ENCODE measurements at regions of chr2 and their contacts with region 1.

Region 1: GRCh38 chr2:149466635-149467034 is 120.9 kb downstream of the MMADHC start:
- DNase-seq: no peak
- H3K4me3 ChIP-seq: no peak overlapping the region
- H3K27me3 ChIP-seq: no peaks in the 10 kb centered on the region
- CTCF ChIP-seq: no peak

Region 2: GRCh38 chr2:149365826-149366583 is 100.6 kb before region 1 on chr2:
- CTCF ChIA-PET with region 1: no interaction called
- POLR2A ChIA-PET with region 1: no interaction called
- DNase-seq: no peak
- H3K4me3 ChIP-seq: no peak overlapping the region
- H3K27me3 ChIP-seq: no peaks in the 10 kb centered on the region
- CTCF ChIP-seq: no peak

Region 3: GRCh38 chr2:149449017-149449416 is 17.6 kb before region 1 on chr2:
- CTCF ChIA-PET with region 1: no interaction called
- POLR2A ChIA-PET with region 1: interaction called, 13 read pairs
- DNase-seq: no peak
- H3K4me3 ChIP-seq: no peak overlapping the region
- H3K27me3 ChIP-seq: no peaks in the 10 kb centered on the region
- CTCF ChIP-seq: no peak

Region 4: GRCh38 chr2:149573760-149574159 is 107.1 kb after region 1 on chr2:
- CTCF ChIA-PET with region 1: no interaction called
- POLR2A ChIA-PET with region 1: no interaction called
- DNase-seq: no peak
- H3K4me3 ChIP-seq: no peak overlapping the region
- H3K27me3 ChIP-seq: no peaks in the 10 kb centered on the region
- CTCF ChIP-seq: peak; percentile 34

Measured in BJ (cell line).